ENCODE measurements at regions of chr4 and their contacts with region 1.

Region 1: DNA sequence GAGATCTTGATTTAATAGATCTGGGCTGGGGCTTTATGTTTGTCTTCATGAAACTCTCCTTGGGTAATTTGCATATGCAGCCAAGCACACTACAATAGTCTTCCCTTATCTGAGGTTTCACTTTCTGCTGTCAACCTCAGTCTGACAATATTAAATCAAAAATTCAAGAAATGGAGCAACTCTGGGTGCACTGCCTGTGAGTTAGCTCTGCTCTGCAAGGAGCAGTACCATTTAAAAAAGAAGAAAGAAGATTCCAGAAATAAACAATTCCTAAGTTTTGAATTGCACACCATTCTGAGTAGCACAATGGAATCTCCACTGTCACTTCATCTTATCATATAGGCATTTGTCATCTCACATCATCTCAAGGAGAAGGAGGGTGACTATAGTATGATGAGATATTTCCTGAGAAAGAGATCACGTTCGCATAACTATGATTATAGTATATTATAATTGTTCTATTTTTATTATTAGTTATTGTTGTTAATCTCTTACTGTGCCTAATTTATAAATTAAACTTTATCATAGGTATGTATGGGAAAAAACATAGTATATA is 9.4 kb downstream of the FNIP2 start:
- DNase-seq: no peak
- H3K4me3 ChIP-seq: no peak overlapping the region
- H3K27ac ChIP-seq: no peak overlapping the region
- H3K4me1 ChIP-seq: peaks cover 26 to 48% of the 10 kb centered on the region in 2 donors
- H3K27me3 ChIP-seq: no peaks in the 10 kb centered on the region
- CTCF ChIP-seq: no peak
- POLR2A ChIP-seq: no peak

Region 2: GRCh38 chr4:158809611-158810486 is 31.6 kb after region 1 on chr4:
- intact Hi-C with region 1: loop called in 1 of 2 experiments (anchors 5 kb)
- DNase-seq: peak in 1 of 7 donors; percentile 25
- H3K4me3 ChIP-seq: peak overlapping the region in 1 of 4 donors; percentile 0
- H3K27ac ChIP-seq: peak overlapping the region in 4 of 5 donors; percentile 1 to 87 (median 60)
- H3K4me1 ChIP-seq: peaks cover 15 to 72% of the 10 kb centered on the region in 2 donors
- H3K27me3 ChIP-seq: no peaks in the 10 kb centered on the region
- CTCF ChIP-seq: no peak
- POLR2A ChIP-seq: no peak

Region 3: DNA sequence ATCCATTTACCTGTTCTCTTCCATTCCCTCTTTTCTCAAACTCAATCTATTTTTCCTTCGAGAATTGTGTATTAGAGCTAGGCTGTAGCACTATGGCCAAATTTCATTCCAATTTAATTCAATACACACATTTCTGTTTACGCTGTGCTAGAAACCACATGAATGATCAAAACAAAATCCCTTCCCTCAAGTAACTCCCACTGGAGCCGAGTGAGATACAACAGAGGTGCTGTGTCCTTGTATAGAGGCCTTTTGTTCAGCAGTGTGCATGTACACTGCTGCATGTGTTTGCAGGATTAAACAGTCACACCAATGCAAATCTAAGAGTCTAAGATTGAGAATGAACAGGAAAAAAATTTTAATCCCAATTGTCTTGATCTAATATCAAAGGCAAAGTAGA is 1058.8 kb after region 1 on chr4:
- intact Hi-C with region 1: no loop called
- DNase-seq: no peak
- H3K4me3 ChIP-seq: no peak overlapping the region
- H3K27ac ChIP-seq: no peak overlapping the region
- H3K4me1 ChIP-seq: no peaks in the 10 kb centered on the region
- H3K27me3 ChIP-seq: no peaks in the 10 kb centered on the region
- CTCF ChIP-seq: no peak
- POLR2A ChIP-seq: no peak

Measured in adrenal gland (tissue), 19 donors.